Aorta (tissue), 5 donors: ENCODE measurements at regions of chr4 and their contacts with region 1.

Region 1: GRCh38 chr4:1130316-1131186 is 17.2 kb upstream of the RNF212 start:
- DNase-seq: peak; percentile 70 to 90
- ATAC-seq: peak; percentile 96
- H3K4me3 ChIP-seq: no peak overlapping the region
- H3K27ac ChIP-seq: no peak overlapping the region
- H3K4me1 ChIP-seq: no peaks in the 10 kb centered on the region
- H3K27me3 ChIP-seq: no peaks in the 10 kb centered on the region

Region 2: GRCh38 chr4:1266881-1267763 is 136.6 kb after region 1 on chr4:
- intact Hi-C with region 1: loop called in 1 of 2 experiments (anchors 1 kb)
- DNase-seq: no peak
- ATAC-seq: no peak
- H3K4me3 ChIP-seq: no peak overlapping the region
- H3K27ac ChIP-seq: no peak overlapping the region
- H3K4me1 ChIP-seq: no peaks in the 10 kb centered on the region
- H3K27me3 ChIP-seq: no peaks in the 10 kb centered on the region